ENCODE measurements at regions of chr16 and their contacts with region 1.

Region 1: DNA sequence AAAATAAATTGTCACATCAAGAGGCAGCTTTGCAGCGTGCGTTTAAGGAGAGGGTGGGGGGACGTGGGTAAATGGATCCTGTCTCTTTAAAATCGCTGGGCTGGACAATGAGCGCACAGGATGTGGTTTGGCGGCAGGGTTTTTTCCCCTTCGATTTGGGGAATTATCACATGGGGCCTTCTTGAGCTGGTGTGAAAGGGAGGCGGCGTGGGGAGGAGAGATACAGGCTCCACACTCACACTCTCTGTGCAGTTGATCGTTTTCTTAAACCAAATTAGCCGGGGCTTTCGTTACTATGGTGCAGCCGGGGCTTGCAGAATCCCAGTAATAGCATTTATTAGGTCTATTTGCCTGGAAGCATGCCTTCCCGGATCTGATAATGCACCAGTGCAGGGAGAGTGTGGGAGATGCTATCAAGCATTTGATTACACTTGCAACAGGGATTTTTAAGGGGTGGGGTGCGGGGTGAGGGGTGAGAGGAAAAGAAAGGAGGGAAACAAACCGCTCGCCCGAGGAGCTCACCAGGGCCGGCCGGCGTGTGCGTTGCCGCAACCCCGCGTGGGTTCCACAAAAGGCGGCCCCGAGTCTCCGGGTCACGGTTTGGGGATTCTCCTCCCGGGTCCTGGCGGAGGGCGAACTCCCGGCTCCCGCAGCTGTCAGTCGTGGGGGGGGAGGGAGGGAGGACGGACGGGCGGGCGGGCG is 58.9 kb upstream of the GSE1 start:
- DNase-seq: peak; percentile 74 to 89 (median 75)
- H3K4me3 ChIP-seq: peak overlapping the region; percentile 65 to 76
- H3K4me3 Mint-ChIP-seq: peak overlapping the region; percentile 88 to 99 (median 94)
- H3K27ac ChIP-seq: peak overlapping the region; percentile 61
- H3K27ac Mint-ChIP-seq: peak overlapping the region; percentile 90 to 98 (median 96)
- H3K4me1 ChIP-seq: peaks cover 21% of the 10 kb centered on the region
- H3K4me1 Mint-ChIP-seq: peaks cover 17 to 43% (median 31%) of the 10 kb centered on the region in 4 donors
- H3K27me3 ChIP-seq: no peaks in the 10 kb centered on the region
- H3K27me3 Mint-ChIP-seq: peaks cover 0 to 1% of the 10 kb centered on the region in 2 donors

Region 2: GRCh38 chr16:85420501-85421337 is 133.5 kb before region 1 on chr16:
- CTCF ChIA-PET with region 1: interaction called, 18 read pairs
- POLR2A ChIA-PET with region 1: no interaction called
- intact Hi-C with region 1: loop called (anchors 5 kb)
- DNase-seq: peak in 4 of 5 donors; percentile 72 to 80 (median 72)
- H3K4me3 ChIP-seq: no peak overlapping the region
- H3K4me3 Mint-ChIP-seq: no peak overlapping the region
- H3K27ac ChIP-seq: no peak overlapping the region
- H3K27ac Mint-ChIP-seq: peak overlapping the region in 2 of 7 donors; percentile 21 to 89
- H3K4me1 ChIP-seq: peaks cover 4% of the 10 kb centered on the region
- H3K4me1 Mint-ChIP-seq: peaks cover 0 to 2% (median under 1%) of the 10 kb centered on the region in 4 donors
- H3K27me3 ChIP-seq: no peaks in the 10 kb centered on the region
- H3K27me3 Mint-ChIP-seq: peaks cover 3 to 7% of the 10 kb centered on the region in 2 donors

Region 3: DNA sequence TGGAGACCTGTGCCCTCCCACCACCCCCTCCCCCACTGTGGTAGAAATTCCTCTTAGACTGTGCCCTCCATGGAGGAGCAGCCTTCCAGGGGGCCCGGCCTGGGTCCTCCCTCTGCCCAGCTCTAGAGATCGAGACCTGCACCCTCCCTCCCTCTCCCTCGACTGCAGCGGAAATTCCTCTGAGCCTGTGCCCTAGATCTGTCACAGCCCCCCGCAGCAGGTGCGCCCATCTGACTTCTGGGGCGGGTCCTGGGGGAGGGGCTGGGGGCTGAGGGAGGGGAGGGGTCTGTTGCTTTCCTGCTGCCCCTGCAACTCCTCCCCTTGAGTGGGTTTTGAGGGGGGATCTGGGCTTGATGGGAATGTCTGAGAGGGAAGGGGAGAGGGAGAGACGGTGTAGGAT is 119.0 kb before region 1 on chr16:
- CTCF ChIA-PET with region 1: no interaction called
- POLR2A ChIA-PET with region 1: no interaction called
- intact Hi-C with region 1: no loop called
- DNase-seq: no peak
- H3K4me3 ChIP-seq: no peak overlapping the region
- H3K4me3 Mint-ChIP-seq: no peak overlapping the region
- H3K27ac ChIP-seq: no peak overlapping the region
- H3K27ac Mint-ChIP-seq: no peak overlapping the region
- H3K4me1 ChIP-seq: no peaks in the 10 kb centered on the region
- H3K4me1 Mint-ChIP-seq: peaks cover 0 to 2% (median 0%) of the 10 kb centered on the region in 4 donors
- H3K27me3 ChIP-seq: no peaks in the 10 kb centered on the region
- H3K27me3 Mint-ChIP-seq: no peaks in the 10 kb centered on the region

Region 4: GRCh38 chr16:85448557-85449197 is 105.6 kb before region 1 on chr16:
- CTCF ChIA-PET with region 1: no interaction called
- POLR2A ChIA-PET with region 1: interaction called, 18 read pairs
- intact Hi-C with region 1: no loop called
- DNase-seq: peak in 4 of 5 donors; percentile 46 to 55 (median 51)
- H3K4me3 ChIP-seq: no peak overlapping the region
- H3K4me3 Mint-ChIP-seq: peak overlapping the region; percentile 18 to 82 (median 72)
- H3K27ac ChIP-seq: no peak overlapping the region
- H3K27ac Mint-ChIP-seq: peak overlapping the region; percentile 83 to 91 (median 89)
- H3K4me1 ChIP-seq: peaks cover 33% of the 10 kb centered on the region
- H3K4me1 Mint-ChIP-seq: peaks cover 13 to 39% (median 16%) of the 10 kb centered on the region in 4 donors
- H3K27me3 ChIP-seq: no peaks in the 10 kb centered on the region
- H3K27me3 Mint-ChIP-seq: no peaks in the 10 kb centered on the region

Region 5: DNA sequence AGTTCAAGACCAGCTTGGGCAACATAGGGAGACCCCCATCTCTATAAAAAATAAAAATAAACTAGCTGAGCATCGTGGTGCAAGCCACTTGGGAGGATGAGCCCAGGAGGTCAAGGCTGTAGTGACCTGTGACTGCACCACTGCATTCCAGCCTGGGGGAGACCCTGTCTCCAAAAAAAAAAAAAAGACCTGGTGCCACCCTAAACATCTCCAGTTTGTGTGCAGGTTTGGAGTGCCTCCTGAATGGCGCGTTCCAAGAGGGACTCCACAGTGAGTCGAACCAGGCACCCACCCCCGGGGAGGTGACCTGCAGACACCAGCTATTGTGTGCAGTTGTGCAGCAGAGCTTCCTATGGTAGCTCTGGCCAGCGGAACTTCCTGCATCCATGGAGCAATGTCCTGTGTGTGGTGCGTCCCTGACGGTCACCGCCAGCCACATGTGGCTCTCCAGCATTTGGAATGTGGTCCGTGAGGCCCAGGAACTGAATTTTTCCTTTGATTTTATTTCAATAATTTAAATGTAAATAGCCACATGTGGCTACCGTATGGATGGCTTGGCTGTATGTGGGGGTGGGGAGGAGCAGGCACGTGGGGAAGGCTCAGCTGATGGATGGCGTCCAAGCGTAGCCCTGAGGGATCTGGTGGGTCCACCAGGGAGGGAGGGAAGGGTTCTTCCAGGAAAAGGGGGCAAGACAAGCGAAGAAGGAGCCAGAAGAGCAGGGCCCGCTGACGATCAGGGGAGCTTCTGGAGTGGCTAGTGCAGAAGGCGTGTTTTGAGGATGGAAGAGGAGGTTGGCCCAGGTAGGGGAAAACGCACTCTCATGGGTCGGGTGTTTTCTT is 48.2 kb before region 1 on chr16:
- CTCF ChIA-PET with region 1: no interaction called
- POLR2A ChIA-PET with region 1: no interaction called
- intact Hi-C with region 1: no loop called
- DNase-seq: no peak
- H3K4me3 ChIP-seq: no peak overlapping the region
- H3K4me3 Mint-ChIP-seq: no peak overlapping the region
- H3K27ac ChIP-seq: no peak overlapping the region
- H3K27ac Mint-ChIP-seq: no peak overlapping the region
- H3K4me1 ChIP-seq: no peaks in the 10 kb centered on the region
- H3K4me1 Mint-ChIP-seq: peaks cover 0 to 3% (median 0%) of the 10 kb centered on the region in 4 donors
- H3K27me3 ChIP-seq: no peaks in the 10 kb centered on the region
- H3K27me3 Mint-ChIP-seq: no peaks in the 10 kb centered on the region

Region 6: DNA sequence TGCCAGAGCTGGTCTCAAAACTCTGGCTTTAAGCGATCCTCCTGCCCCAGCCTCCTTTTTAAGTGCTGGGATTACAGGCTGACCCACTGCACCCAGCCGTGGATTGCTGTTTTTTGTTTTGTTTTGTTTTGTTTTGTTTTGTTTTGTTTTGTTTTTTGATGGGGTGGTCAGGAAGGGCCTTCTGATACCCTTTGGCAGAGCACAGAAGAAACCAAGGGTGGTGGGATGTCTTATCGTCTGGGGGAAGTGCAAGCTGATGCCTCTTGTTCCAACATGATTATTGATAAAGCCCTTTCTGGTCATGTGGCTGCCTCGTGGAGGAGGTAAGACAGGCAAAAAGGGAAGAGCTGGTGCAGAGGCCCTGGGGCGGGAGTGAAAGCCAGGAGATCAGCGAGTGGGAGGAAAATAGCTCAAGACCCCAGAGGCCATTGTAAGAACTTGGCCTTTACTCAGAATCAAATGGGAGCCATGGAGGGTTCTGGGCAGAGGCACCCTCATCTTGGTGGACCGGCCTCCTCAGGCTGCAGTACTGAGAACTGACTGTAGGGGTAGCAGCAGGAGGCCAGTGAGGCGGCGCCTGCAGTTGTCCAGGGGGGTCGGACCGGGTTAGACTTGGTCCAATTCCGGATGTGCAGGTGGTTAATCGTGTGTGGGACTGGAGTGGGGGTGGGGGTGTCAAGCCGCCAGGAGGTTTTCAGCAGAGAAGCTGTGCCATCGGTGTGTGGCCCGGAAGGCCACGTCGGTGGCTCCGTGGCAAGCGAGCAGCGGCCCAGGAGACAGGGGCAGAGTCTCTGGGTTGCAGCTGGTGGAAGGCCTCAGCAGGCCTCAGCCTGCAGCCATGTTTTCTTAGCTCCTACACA is 25.5 kb before region 1 on chr16:
- CTCF ChIA-PET with region 1: interaction called, 10 read pairs
- POLR2A ChIA-PET with region 1: interaction called, 4 read pairs
- intact Hi-C with region 1: no loop called
- DNase-seq: peak in 1 of 5 donors; percentile 15
- H3K4me3 ChIP-seq: no peak overlapping the region
- H3K4me3 Mint-ChIP-seq: no peak overlapping the region
- H3K27ac ChIP-seq: no peak overlapping the region
- H3K27ac Mint-ChIP-seq: peak overlapping the region in 1 of 7 donors; percentile 61
- H3K4me1 ChIP-seq: no peaks in the 10 kb centered on the region
- H3K4me1 Mint-ChIP-seq: no peaks in the 10 kb centered on the region
- H3K27me3 ChIP-seq: no peaks in the 10 kb centered on the region
- H3K27me3 Mint-ChIP-seq: no peaks in the 10 kb centered on the region

Region 7: GRCh38 chr16:85543536-85543935 is 10.7 kb before region 1 on chr16:
- CTCF ChIA-PET with region 1: interaction called, 5 read pairs
- POLR2A ChIA-PET with region 1: interaction called, 17 read pairs
- intact Hi-C with region 1: no loop called
- DNase-seq: no peak
- H3K4me3 ChIP-seq: no peak overlapping the region
- H3K4me3 Mint-ChIP-seq: no peak overlapping the region
- H3K27ac ChIP-seq: no peak overlapping the region
- H3K27ac Mint-ChIP-seq: no peak overlapping the region
- H3K4me1 ChIP-seq: no peaks in the 10 kb centered on the region
- H3K4me1 Mint-ChIP-seq: peaks cover 0 to 5% (median 0%) of the 10 kb centered on the region in 4 donors
- H3K27me3 ChIP-seq: no peaks in the 10 kb centered on the region
- H3K27me3 Mint-ChIP-seq: no peaks in the 10 kb centered on the region

Region 8: DNA sequence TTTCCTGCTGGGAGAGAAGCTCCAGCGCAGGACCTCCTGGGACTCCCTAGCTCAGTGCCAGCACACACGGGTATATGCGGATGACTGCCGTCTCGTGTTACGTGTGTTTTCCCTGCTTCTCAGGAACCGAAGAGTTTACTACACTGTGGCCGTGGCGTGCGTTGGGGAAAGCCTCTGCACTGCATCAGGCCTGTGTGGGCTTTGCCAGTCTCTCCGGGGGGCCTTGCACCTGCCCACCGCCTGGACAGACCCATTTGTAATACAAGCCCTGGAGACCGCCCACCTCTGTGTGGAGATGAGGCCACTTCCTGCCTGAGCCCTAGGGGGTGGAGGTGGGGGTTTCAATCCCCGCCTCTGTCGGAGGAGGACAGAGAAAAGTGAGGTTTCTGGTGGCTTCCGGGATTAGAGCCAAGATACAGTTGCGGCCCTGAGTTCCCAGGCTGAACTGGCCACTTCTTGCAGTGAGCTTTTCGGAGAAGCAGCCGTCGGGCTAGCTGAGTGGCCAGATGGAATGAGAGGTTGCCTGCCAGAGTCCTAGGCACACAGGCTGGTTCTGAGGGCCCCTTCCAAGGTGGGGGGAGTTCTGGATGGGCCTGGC is 15.5 kb after region 1 on chr16:
- CTCF ChIA-PET with region 1: interaction called, 31 read pairs
- POLR2A ChIA-PET with region 1: interaction called, 51 read pairs
- intact Hi-C with region 1: loop called (anchors 2 kb)
- DNase-seq: peak in 3 of 5 donors; percentile 21 to 52 (median 30)
- H3K4me3 ChIP-seq: peak overlapping the region in 1 of 2 donors; percentile 17
- H3K4me3 Mint-ChIP-seq: peak overlapping the region; percentile 33 to 82 (median 72)
- H3K27ac ChIP-seq: peak overlapping the region; percentile 16
- H3K27ac Mint-ChIP-seq: peak overlapping the region; percentile 79 to 92 (median 88)
- H3K4me1 ChIP-seq: peaks cover 47% of the 10 kb centered on the region
- H3K4me1 Mint-ChIP-seq: peaks cover 34 to 73% (median 54%) of the 10 kb centered on the region in 4 donors
- H3K27me3 ChIP-seq: no peaks in the 10 kb centered on the region
- H3K27me3 Mint-ChIP-seq: no peaks in the 10 kb centered on the region

Measured in CD4-positive, alpha-beta memory T cell (primary cell).